Activated B cell treated with CpG ODN at 0.5 μM for 24 hours (primary cell): ENCODE measurements at regions of chr22 and their contacts with region 1.

Region 1: DNA sequence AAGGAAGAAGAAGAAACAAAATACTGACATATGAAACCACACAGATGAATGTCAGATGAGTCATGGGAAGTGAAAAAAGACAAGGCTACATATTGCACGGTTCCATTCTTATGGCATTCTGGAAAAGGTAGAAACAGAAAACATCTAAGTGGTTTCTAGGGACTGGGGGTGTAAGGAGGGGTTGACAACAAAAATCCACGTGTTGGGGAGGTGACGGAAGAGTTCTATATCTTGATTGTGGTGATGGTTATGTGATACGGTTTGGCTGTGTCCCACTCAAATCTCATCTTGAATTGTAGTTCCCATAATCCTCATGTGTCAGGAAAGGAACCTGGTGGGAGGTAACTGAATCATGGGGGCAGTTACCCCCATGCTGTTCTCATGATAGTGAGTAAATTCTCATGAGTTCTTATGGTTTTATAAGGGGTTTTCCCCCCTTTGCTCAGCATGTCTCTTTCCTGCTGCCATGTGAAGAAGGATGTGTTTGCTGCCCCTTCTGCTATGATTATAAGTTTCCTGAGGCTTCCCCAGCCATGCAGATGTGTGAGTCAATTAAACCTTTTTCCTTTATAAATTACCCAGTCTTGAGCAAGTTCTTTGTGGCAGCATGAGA is 6.4 kb upstream of the ARFGAP3 start:
- DNase-seq: no peak
- ATAC-seq: peak; percentile 60
- H3K4me3 Mint-ChIP-seq: peak overlapping the region; percentile 64
- H3K27ac Mint-ChIP-seq: peak overlapping the region; percentile 96
- H3K4me1 Mint-ChIP-seq: peaks cover 45% of the 10 kb centered on the region
- H3K27me3 Mint-ChIP-seq: no peaks in the 10 kb centered on the region
- CTCF ChIP-seq: no peak

Region 2: DNA sequence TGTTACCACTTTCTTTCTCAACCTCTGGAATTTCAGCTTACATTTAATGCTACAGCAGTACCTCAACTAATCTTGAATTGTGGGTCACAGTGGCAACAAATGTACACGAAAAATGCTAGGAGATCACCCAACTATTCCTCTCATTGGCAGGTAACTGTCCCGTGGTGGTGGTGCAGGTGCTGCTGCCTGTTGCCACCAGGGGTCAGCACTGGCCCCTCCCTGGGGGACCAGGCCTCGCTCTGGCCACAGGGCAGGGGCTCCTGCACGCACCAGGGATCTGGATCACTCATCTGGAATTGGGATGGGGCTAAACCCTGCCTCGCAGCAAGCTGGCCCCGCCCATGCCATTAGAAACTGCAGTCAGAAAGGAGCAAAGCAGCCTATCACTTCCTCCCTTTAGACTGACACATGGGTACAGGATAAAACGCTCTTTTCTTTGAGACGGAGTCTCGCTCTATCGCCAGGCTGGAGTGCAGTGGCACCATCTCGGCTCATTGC is 241.9 kb before region 1 on chr22:
- CTCF ChIA-PET with region 1: interaction called, 11 read pairs
- POLR2A ChIA-PET with region 1: no interaction called
- intact Hi-C with region 1: loop called (anchors 1 kb)
- DNase-seq: peak; percentile 69
- ATAC-seq: peak; percentile 80
- H3K4me3 Mint-ChIP-seq: no peak overlapping the region
- H3K27ac Mint-ChIP-seq: peak overlapping the region; percentile 30
- H3K4me1 Mint-ChIP-seq: peaks cover 33% of the 10 kb centered on the region
- H3K27me3 Mint-ChIP-seq: no peaks in the 10 kb centered on the region
- CTCF ChIP-seq: peak; percentile 46

Region 3: DNA sequence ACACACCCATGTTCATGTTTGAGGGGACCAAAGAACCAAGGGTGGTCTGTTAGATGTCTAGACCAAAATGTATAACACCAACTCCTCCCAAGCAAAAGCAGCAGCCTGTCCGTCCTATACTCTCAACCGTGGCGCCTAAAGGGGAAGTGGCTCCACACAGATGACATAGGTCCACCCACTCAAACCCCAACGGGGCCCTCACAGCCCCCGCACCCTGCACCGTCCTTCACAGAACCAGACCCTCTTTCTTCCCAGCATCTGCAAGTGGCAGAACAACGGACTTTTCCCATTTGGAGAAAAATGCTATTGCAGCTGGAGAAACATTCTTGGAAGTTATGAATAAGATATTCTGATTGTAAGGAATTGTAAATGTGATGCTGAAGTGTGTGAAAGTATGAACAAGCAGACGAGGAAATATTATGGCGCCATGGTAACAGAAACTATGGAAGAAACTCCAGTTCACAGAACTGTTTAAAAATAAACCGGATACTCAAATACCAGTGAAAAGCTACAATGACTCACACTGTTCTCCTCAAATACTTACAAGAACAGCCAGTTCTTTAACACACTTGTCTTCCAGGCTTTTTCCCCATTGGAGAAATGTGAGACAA is 70.1 kb after region 1 on chr22:
- CTCF ChIA-PET with region 1: no interaction called
- POLR2A ChIA-PET with region 1: interaction called, 9 read pairs
- intact Hi-C with region 1: loop called (anchors 1 kb)
- DNase-seq: peak; percentile 59
- ATAC-seq: peak; percentile 73
- H3K4me3 Mint-ChIP-seq: peak overlapping the region; percentile 82
- H3K27ac Mint-ChIP-seq: peak overlapping the region; percentile 98
- H3K4me1 Mint-ChIP-seq: peaks cover 99% of the 10 kb centered on the region
- H3K27me3 Mint-ChIP-seq: no peaks in the 10 kb centered on the region
- CTCF ChIP-seq: no peak

Region 4: DNA sequence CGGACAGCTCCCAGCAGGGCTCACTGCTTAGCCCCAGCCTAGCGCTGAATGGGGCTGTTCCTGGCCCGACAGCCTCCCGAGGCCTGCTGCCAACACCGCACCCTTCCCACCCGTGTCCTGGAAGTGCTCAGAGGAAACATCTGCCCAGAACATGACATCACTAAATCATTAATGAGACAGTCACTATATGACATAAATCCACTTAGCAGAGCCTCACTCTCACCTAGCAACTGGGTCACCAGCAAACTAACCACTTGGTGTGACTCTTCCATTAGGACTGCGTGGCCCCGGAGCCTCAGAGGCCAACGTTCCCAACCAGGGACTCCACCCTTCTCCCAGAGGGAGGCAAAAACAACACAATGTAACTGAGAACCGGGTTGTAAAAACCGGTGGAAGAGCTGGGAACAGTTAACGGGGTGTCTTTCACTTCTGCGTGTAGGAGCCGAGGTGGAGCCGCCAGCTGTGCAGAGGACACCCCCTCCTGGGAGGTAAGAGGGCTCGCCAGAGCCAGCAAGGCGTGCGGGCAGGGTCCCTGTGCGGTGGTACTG is 172.9 kb after region 1 on chr22:
- CTCF ChIA-PET with region 1: interaction called, 25 read pairs
- POLR2A ChIA-PET with region 1: interaction called, 4 read pairs
- intact Hi-C with region 1: loop called (anchors 1 kb)
- DNase-seq: no peak
- ATAC-seq: no peak
- H3K4me3 Mint-ChIP-seq: no peak overlapping the region
- H3K27ac Mint-ChIP-seq: no peak overlapping the region
- H3K4me1 Mint-ChIP-seq: peaks cover 2% of the 10 kb centered on the region
- H3K27me3 Mint-ChIP-seq: no peaks in the 10 kb centered on the region
- CTCF ChIP-seq: no peak

Region 5: GRCh38 chr22:43187171-43188099 is 324.0 kb after region 1 on chr22:
- CTCF ChIA-PET with region 1: no interaction called
- POLR2A ChIA-PET with region 1: interaction called, 11 read pairs
- intact Hi-C with region 1: no loop called
- DNase-seq: peak; percentile 97
- ATAC-seq: peak; percentile 88
- H3K4me3 Mint-ChIP-seq: peak overlapping the region; percentile 81
- H3K27ac Mint-ChIP-seq: peak overlapping the region; percentile 92
- H3K4me1 Mint-ChIP-seq: peaks cover 14% of the 10 kb centered on the region
- H3K27me3 Mint-ChIP-seq: peaks cover 3% of the 10 kb centered on the region
- CTCF ChIP-seq: no peak